Colonic mucosa (tissue), 4 donors: ENCODE measurements at regions of chr13 and their contacts with region 1.

Region 1: DNA sequence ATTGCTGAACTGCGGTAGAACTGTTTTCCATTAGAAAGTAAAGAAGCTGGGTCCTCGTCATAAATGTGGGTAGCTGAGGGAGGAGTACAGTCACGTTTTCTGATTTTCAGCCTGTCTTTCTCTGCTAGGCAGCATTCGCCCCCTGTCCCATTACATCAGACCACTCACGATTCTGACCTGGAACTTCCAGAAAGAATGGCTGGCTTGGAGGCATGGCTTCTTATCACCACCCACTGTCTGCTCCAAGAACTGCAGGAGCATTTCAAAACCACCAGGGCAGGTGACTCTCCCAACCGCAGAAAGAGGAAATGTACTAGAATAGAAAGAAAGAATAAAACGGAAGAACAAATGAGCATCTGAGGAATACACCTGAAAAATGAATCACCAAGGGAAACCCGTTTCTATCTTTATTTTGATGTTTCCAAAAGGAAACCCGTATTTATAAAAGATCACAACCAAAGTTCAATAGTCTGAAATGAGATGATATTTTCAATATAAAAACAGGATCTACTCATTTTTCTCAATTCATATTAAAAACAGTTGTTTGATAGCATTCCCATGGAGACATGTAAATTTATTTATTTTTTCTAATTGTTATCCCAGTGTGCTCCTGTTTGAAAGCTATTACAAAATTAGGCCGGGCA is 22.1 kb upstream of the POMP start:
- DNase-seq: peak; percentile 54
- H3K4me3 ChIP-seq: no peak overlapping the region
- H3K27ac ChIP-seq: no peak overlapping the region
- H3K4me1 ChIP-seq: no peaks in the 10 kb centered on the region
- H3K27me3 ChIP-seq: no peaks in the 10 kb centered on the region
- CTCF ChIP-seq: peak; percentile 84

Region 2: DNA sequence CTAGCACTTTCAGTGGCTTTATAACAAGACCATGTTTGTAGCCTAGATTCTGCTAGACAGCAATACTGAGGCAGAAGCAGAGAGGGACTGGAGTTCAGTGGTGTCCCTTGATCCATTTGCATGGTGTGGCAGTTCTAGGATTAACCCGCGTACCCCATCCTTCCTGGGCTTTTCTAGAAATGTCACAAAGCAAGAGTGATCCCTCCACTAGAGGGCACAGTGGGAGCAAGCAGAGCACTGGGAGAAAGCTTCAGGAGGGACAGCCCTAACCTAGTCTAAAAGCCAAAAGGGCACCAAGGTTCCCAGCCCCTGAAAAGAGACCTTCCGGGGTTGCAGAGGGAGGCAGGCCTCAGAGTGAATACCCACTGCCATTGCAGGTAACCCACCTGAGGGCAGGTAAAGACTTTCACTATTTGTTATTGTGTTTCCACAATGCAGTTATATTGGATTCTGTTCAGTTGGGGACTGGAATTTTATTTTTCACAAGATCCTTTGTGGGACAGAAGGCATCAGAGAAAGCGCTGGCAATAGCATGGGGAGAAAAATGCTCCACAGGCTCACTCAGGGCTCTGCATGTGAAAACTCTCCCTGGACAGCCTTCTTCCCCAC is 312.5 kb before region 1 on chr13:
- intact Hi-C with region 1: loop called (anchors 5 kb)
- DNase-seq: peak; percentile 71
- H3K4me3 ChIP-seq: no peak overlapping the region
- H3K27ac ChIP-seq: no peak overlapping the region
- H3K4me1 ChIP-seq: no peaks in the 10 kb centered on the region
- H3K27me3 ChIP-seq: no peaks in the 10 kb centered on the region
- CTCF ChIP-seq: peak; percentile 55

Region 3: GRCh38 chr13:28355822-28356371 is 280.9 kb before region 1 on chr13:
- intact Hi-C with region 1: no loop called
- DNase-seq: no peak
- H3K4me3 ChIP-seq: no peak overlapping the region
- H3K27ac ChIP-seq: no peak overlapping the region
- H3K4me1 ChIP-seq: no peaks in the 10 kb centered on the region
- H3K27me3 ChIP-seq: no peaks in the 10 kb centered on the region
- CTCF ChIP-seq: no peak

Region 4: GRCh38 chr13:28527411-28528028 is 109.3 kb before region 1 on chr13:
- intact Hi-C with region 1: loop called (anchors 5 kb)
- DNase-seq: no peak
- H3K4me3 ChIP-seq: no peak overlapping the region
- H3K27ac ChIP-seq: no peak overlapping the region
- H3K4me1 ChIP-seq: no peaks in the 10 kb centered on the region
- H3K27me3 ChIP-seq: peaks cover 5% of the 10 kb centered on the region
- CTCF ChIP-seq: no peak

Region 5: GRCh38 chr13:28574617-28575142 is 62.1 kb before region 1 on chr13:
- intact Hi-C with region 1: no loop called
- DNase-seq: peak; percentile 65
- H3K4me3 ChIP-seq: no peak overlapping the region
- H3K27ac ChIP-seq: peak overlapping the region; percentile 52
- H3K4me1 ChIP-seq: no peaks in the 10 kb centered on the region
- H3K27me3 ChIP-seq: no peaks in the 10 kb centered on the region
- CTCF ChIP-seq: no peak